Activated T-helper 2 cell treated with anti-CD3 and anti-CD28 coated beads, Interferon-gamma antibody, Interleukin-2, Interleukin-4, amounts not matched to agents 10 μg/mL and 5 μg/mL and 100 μg/mL, durations not matched to agents 14 hours and 24 hours and 36 hours (primary cell): ENCODE measurements at regions of chr2 and their contacts with region 1.

Region 1: GRCh38 chr2:134683561-134684112 is 35.2 kb downstream of the TMEM163 start:
- DNase-seq: no peak
- H3K4me3 Mint-ChIP-seq: no peak overlapping the region
- H3K27ac Mint-ChIP-seq: peak overlapping the region; percentile 8
- H3K4me1 Mint-ChIP-seq: peaks cover 44% of the 10 kb centered on the region
- H3K27me3 Mint-ChIP-seq: peaks cover 16% of the 10 kb centered on the region

Region 2: GRCh38 chr2:134232868-134233727 is 450.5 kb before region 1 on chr2:
- intact Hi-C with region 1: loop called (anchors 1 kb)
- DNase-seq: no peak
- H3K4me3 Mint-ChIP-seq: no peak overlapping the region
- H3K27ac Mint-ChIP-seq: peak overlapping the region; percentile 10
- H3K4me1 Mint-ChIP-seq: peaks cover 42% of the 10 kb centered on the region
- H3K27me3 Mint-ChIP-seq: peaks cover 17% of the 10 kb centered on the region

Region 3: DNA sequence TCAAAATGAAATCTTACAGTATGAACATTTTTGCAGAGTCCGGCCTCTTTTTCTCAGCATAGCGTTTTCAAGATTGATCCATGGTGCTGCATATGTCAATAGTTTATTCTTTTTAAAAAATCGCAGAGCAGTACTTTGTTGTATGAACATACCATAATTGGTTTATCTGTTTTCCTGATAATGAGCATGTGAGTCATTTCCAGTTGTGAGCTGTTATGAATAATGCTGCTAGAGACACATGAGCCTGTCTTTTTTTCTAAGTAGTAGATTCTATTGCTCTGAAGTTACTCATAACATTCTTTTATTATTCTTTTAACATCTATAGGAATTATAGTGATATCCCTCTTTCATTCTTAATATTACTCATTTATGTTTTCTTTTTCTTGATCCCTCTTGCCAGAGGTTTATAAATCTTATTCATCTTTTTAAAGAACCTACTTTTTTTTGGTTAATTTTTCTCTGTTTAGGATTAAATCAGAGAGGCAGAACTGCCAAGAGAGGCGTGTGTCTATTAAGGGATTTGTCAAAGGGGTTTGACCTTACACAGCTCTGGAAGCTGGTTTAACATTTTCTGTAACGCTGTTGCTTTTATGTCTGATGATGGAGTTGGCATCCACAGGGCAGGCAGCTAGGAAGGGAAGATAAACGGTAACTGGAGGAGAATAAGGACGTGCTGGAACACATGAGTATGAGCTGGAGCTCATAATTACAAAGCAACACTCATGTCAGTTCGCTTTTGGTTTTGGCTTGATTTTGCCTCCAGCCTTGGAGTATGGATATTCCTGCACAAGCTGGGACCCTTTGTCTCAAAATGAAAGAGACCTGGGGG is 382.3 kb before region 1 on chr2:
- intact Hi-C with region 1: loop called (anchors 5 kb)
- DNase-seq: no peak
- H3K4me3 Mint-ChIP-seq: no peak overlapping the region
- H3K27ac Mint-ChIP-seq: no peak overlapping the region
- H3K4me1 Mint-ChIP-seq: peaks cover 15% of the 10 kb centered on the region
- H3K27me3 Mint-ChIP-seq: peaks cover 37% of the 10 kb centered on the region

Region 4: DNA sequence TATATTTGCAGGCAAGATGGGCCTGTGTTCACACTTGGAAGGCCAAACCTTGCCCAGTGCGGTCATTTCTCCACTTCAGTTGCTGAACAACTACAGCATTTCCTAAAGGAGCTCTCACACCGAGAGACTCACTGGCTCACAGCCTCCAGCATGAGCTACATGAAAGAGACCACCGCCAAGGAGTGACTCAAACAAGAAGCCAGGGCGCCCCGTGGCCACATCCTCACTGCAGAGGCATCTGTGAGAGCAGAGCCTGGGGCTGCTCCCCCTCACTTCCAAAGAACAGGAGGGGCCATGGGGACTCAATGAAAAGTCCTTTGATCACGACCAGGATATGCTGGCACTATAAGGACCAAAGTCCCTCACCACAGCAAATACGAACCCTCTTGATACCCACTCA is 14.8 kb before region 1 on chr2:
- intact Hi-C with region 1: loop called (anchors 1 kb)
- DNase-seq: peak; percentile 76
- H3K4me3 Mint-ChIP-seq: no peak overlapping the region
- H3K27ac Mint-ChIP-seq: peak overlapping the region; percentile 28
- H3K4me1 Mint-ChIP-seq: peaks cover 67% of the 10 kb centered on the region
- H3K27me3 Mint-ChIP-seq: peaks cover 33% of the 10 kb centered on the region

Region 5: DNA sequence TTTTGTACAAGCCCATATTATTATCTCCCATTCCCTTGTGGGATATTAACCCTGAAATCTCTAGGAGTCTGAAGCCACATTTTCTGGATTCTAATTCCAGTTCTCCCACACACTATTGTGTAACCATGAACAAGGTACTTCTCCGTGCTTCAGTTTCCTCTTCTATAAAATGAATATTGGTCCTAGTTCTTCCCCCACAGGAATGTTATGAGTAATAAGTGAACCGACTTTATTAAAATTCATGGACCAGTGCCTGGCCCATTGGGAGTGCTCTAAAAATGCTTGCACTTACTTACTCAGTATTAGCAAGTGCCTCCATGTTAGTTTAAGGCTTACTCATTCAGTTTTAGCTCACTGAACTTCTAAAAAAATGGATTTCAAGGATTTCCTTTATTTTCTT is 153.3 kb after region 1 on chr2:
- intact Hi-C with region 1: no loop called
- DNase-seq: no peak
- H3K4me3 Mint-ChIP-seq: no peak overlapping the region
- H3K27ac Mint-ChIP-seq: no peak overlapping the region
- H3K4me1 Mint-ChIP-seq: no peaks in the 10 kb centered on the region
- H3K27me3 Mint-ChIP-seq: peaks cover 15% of the 10 kb centered on the region

Region 6: DNA sequence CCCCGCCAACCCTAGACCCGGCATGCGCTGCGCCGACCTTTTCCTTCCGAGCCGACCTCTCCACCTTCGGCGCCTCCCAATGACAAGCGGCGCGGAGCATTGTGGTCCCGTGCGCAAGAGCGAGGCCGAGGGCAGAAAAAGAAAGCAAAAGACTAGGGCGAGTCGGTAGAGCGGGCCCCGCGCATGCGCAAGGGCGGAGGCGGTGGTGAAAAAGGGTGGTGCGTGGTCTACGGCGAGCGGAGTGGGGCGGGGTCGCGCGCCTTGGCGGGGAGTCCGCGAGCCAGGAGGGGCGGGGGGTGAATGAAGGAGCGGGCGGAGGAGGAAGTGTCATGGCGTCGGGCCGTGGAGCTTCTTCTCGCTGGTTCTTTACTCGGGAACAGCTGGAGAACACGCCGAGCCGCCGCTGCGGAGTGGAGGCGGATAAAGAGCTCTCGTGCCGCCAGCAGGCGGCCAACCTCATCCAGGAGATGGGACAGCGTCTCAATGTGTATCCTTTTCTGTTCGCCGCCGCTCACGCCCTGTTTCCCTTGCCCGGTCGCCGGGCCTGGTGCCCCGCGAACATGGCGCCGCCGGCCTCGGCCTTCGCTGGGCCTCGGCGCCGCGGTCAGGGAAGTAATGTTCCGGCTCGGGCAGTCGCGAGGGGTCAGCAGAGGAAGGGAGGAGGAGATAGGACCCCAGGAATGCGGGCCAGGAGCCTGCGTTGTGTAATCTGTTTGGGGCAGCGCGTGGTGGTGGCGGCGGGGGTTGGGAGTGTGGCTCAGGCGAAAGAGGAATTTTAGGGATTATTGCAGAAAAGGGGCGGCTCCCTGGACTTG is 235.1 kb after region 1 on chr2 and contains the start of gene CCNT2:
- intact Hi-C with region 1: loop called (anchors 1 kb)
- DNase-seq: peak; percentile 100
- H3K4me3 Mint-ChIP-seq: peak within 1 kb of the TSS; percentile 99
- H3K27ac Mint-ChIP-seq: peak within 1 kb of the TSS; percentile 98
- H3K4me1 Mint-ChIP-seq: peaks cover 20% of the 10 kb centered on the region
- H3K27me3 Mint-ChIP-seq: peaks cover 3% of the 10 kb centered on the region
- total RNA-seq, gene CCNT2: 39.2 and 41.0 TPM in 2 replicates